Panc1 (cell line): ENCODE measurements at regions of chr1 and their contacts with region 1.

Region 1: GRCh38 chr1:2623571-2624337 is 9.1 kb downstream of the MMEL1 start:
- DNase-seq: no peak
- ATAC-seq: no peak
- H3K4me3 ChIP-seq: no peak overlapping the region
- H3K27ac ChIP-seq: no peak overlapping the region
- H3K4me1 ChIP-seq: peaks cover 4% of the 10 kb centered on the region; the same call in 1 of the 2 replicates
- H3K27me3 ChIP-seq: peaks cover 26% of the 10 kb centered on the region
- CTCF ChIP-seq: no peak

Region 2: DNA sequence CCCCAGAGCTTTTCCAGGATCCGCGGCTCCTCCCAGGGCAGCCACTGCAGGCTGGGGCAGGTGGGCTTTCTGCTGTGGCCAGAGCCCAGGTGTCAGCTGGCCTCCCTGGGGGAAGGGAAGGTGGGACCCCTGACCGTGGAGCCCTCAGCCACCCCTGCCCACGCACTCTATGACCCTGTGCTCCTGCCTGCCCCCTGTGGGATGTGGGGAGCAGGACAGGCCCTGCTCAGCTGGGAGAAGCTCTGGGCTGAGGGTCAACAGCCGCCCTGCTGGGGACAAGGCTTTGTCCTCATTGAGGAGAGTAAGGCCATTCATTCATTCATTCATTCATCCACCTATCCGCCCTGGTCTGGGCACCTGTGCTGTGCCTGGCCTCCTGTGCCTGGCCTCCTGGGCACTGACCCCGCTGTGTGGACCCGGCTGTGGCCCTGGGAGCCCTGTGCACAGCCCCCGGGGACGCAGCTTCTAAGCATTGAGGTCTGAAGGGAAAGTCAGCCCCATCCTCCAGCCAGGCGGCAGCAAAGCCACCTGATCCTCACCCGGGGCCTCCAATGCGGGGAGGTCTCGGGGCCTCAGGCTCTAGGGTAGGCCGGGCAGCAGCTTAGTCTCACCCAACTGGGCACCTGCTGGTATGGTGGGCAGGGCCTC is 61.7 kb before region 1 on chr1:
- CTCF ChIA-PET with region 1: interaction called, 15 read pairs
- POLR2A ChIA-PET with region 1: no interaction called
- in situ Hi-C with region 1: no loop called
- intact Hi-C with region 1: no loop called
- DNase-seq: no peak
- ATAC-seq: no peak; the same call in 1 of the 2 replicates
- H3K4me3 ChIP-seq: no peak overlapping the region
- H3K27ac ChIP-seq: no peak overlapping the region
- H3K4me1 ChIP-seq: peaks cover 4% of the 10 kb centered on the region
- H3K27me3 ChIP-seq: no peaks in the 10 kb centered on the region
- CTCF ChIP-seq: no peak; the same call in 1 of the 2 replicates

Region 3: GRCh38 chr1:2611031-2611501 is 12.7 kb before region 1 on chr1:
- CTCF ChIA-PET with region 1: no interaction called
- POLR2A ChIA-PET with region 1: no interaction called
- in situ Hi-C with region 1: no loop called
- intact Hi-C with region 1: no loop called
- DNase-seq: no peak
- ATAC-seq: peak; percentile 69
- H3K4me3 ChIP-seq: peak overlapping the region in 1 of 2 experiments; percentile 14; a peak in 1 of 4 replicates
- H3K27ac ChIP-seq: no peak overlapping the region
- H3K4me1 ChIP-seq: no peaks in the 10 kb centered on the region
- H3K27me3 ChIP-seq: peaks cover 4% of the 10 kb centered on the region; the same call in 1 of the 2 replicates
- CTCF ChIP-seq: no peak

Region 4: GRCh38 chr1:3384407-3384806 is 760.7 kb after region 1 on chr1:
- CTCF ChIA-PET with region 1: interaction called, 10 read pairs
- POLR2A ChIA-PET with region 1: no interaction called
- in situ Hi-C with region 1: no loop called
- intact Hi-C with region 1: no loop called
- DNase-seq: no peak
- ATAC-seq: no peak
- H3K4me3 ChIP-seq: no peak overlapping the region
- H3K27ac ChIP-seq: no peak overlapping the region
- H3K4me1 ChIP-seq: no peaks in the 10 kb centered on the region; the same call in 1 of the 2 replicates
- H3K27me3 ChIP-seq: no peaks in the 10 kb centered on the region
- CTCF ChIP-seq: no peak